Natural killer cell (primary cell): ENCODE measurements at regions of chr21 and their contacts with region 1.

Region 1: DNA sequence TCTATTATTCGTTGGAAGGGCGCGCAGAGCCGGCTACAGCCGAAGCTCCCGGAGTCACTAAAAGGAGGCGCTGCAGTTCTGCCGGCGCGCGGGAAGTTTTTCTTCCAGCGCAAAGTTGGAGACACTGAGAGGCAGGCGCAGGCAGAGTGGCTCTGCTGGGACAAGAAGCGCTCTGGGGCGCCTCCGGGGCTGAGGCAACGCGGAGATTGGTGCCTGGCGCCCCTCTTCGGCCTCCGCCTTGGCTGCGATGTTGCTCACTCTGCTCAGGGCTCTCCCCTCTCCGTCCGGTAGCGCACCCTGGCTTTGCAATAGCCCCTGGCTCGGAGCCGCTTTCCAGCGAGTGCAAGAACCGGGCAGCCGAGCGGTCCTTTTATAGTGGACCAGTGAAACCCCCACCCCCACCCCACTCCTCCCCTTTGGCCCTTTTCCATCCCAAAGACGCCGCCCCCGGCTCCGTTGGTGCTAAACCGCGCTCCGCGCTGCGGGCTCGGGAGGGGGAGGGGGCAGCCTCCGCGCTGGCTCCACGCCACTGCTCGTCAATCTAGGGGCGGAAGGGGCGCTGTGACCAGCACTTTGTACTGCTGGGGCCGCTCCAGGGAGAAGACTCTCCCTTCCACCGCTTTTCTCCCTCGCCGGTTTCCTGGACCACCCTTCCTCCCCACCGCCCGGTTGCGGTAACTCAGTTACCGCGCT is at the start of gene ADAMTS1:
- DNase-seq: peak; percentile 42 to 61
- ATAC-seq: peak; percentile 52 to 65 (median 63)
- H3K4me3 ChIP-seq: peak within 1 kb of the TSS; percentile 70
- H3K4me3 Mint-ChIP-seq: peak within 1 kb of the TSS; percentile 91
- H3K27ac ChIP-seq: peak within 1 kb of the TSS; percentile 34
- H3K27ac Mint-ChIP-seq: peak within 1 kb of the TSS; percentile 81 to 91
- H3K4me1 ChIP-seq: peaks cover 38% of the 10 kb centered on the region
- H3K4me1 Mint-ChIP-seq: peaks cover 58 to 71% of the 10 kb centered on the region in 2 donors
- H3K27me3 ChIP-seq: no peaks in the 10 kb centered on the region
- H3K27me3 Mint-ChIP-seq: peaks cover 9 to 15% of the 10 kb centered on the region in 2 donors
- CTCF ChIP-seq: no peak
- total RNA-seq, gene ADAMTS1: 12.5 to 18.7 (median 17.1) TPM

Region 2: DNA sequence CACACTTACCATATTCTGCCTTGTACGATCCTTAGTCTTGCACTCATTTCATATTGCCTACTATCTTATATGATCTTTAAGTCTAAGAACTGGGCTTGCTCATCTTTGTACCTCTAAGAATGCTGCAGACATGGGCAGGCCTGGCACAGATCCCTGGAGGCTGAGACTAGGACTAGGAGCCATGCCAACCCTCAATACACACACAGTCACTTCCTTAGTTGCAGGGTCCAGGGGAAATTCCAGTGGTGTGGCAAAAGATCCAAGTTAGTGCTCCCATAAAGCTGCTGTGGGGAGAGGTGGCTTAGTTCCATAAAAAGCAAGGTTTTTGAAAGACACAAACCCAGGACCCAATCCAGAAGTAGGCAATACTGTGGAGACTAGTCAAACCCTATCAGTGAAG is 332.0 kb before region 1 on chr21:
- intact Hi-C with region 1: no loop called
- DNase-seq: no peak
- ATAC-seq: no peak
- H3K4me3 ChIP-seq: no peak overlapping the region
- H3K4me3 Mint-ChIP-seq: no peak overlapping the region
- H3K27ac ChIP-seq: no peak overlapping the region
- H3K27ac Mint-ChIP-seq: no peak overlapping the region
- H3K4me1 ChIP-seq: no peaks in the 10 kb centered on the region
- H3K4me1 Mint-ChIP-seq: no peaks in the 10 kb centered on the region
- H3K27me3 ChIP-seq: no peaks in the 10 kb centered on the region
- H3K27me3 Mint-ChIP-seq: no peaks in the 10 kb centered on the region
- CTCF ChIP-seq: no peak

Region 3: DNA sequence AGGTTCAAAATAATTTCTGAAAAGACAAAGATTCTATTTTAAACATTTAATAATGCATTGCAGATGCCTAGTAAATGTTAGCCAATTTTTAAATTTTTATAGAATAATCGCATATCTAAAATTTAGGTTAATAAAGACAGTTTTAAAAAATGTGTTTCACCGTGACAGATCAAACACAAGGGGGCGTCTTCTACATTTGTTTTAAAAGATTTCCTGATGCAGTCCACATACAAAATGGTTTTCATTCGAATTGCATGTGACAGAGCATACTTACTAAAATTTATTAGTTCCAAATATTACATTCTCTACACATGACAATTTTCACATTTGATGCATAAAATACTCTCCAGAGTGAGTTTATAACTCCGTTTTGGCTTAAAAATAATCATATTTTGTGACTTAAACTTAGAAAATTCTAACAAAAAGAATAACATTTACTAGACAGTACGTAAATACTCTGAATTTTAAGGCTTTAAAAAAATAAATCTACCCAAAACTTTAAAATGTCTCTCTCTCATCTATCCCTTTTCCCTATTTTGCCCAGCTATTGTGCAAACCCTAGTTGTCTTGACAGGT is 75.5 kb before region 1 on chr21:
- intact Hi-C with region 1: loop called (anchors 2 kb)
- DNase-seq: peak in 1 of 2 donors; percentile 20
- ATAC-seq: no peak
- H3K4me3 ChIP-seq: no peak overlapping the region
- H3K4me3 Mint-ChIP-seq: no peak overlapping the region
- H3K27ac ChIP-seq: no peak overlapping the region
- H3K27ac Mint-ChIP-seq: no peak overlapping the region
- H3K4me1 ChIP-seq: no peaks in the 10 kb centered on the region
- H3K4me1 Mint-ChIP-seq: no peaks in the 10 kb centered on the region
- H3K27me3 ChIP-seq: no peaks in the 10 kb centered on the region
- H3K27me3 Mint-ChIP-seq: no peaks in the 10 kb centered on the region
- CTCF ChIP-seq: peak; percentile 67

Region 4: DNA sequence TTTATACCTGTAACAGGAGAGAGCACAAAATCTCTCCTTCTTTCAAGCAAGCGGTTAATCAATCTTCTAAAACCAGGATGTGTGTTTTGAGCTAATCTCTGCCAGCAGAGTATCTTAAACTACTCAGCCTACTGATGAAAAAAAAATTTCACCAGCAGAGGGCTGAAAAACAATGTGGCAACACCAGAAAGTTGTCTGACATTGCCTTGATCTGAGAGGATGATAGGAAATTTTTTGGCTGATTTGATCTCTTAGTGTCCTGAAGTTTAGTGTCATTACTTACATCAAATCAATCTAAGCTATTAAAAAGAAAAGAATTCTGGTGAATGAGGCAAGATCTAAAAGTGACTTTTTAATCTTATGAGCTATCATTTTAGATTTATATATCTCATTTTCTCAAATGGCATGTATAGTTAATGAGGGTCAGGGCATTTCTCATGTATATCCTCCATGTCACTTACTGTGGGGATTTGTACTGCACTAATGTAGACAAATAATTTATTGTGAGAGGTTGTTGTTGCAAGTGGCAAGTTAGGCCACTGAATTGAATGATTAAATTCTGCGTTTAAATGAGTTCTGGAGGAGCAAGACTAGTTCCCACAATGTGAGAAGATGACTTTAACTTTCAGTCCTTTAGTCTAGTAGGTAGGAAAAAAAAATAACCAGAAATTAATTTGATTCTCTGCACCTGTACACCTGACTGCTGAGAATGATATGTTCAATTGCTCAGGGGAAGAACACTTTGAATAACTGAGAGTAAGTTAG is 10.8 kb before region 1 on chr21:
- intact Hi-C with region 1: loop called (anchors 2 kb)
- DNase-seq: peak in 1 of 2 donors; percentile 9
- ATAC-seq: peak; percentile 40 to 66 (median 57)
- H3K4me3 ChIP-seq: no peak overlapping the region
- H3K4me3 Mint-ChIP-seq: peak overlapping the region; percentile 79
- H3K27ac ChIP-seq: no peak overlapping the region
- H3K27ac Mint-ChIP-seq: peak overlapping the region; percentile 84 to 94
- H3K4me1 ChIP-seq: peaks cover 40% of the 10 kb centered on the region
- H3K4me1 Mint-ChIP-seq: peaks cover 72 to 74% of the 10 kb centered on the region in 2 donors
- H3K27me3 ChIP-seq: no peaks in the 10 kb centered on the region
- H3K27me3 Mint-ChIP-seq: no peaks in the 10 kb centered on the region
- CTCF ChIP-seq: no peak

Region 5: GRCh38 chr21:27275294-27275927 is 430.2 kb after region 1 on chr21:
- intact Hi-C with region 1: no loop called
- DNase-seq: no peak
- ATAC-seq: no peak
- H3K4me3 ChIP-seq: no peak overlapping the region
- H3K4me3 Mint-ChIP-seq: no peak overlapping the region
- H3K27ac ChIP-seq: no peak overlapping the region
- H3K27ac Mint-ChIP-seq: no peak overlapping the region
- H3K4me1 ChIP-seq: no peaks in the 10 kb centered on the region
- H3K4me1 Mint-ChIP-seq: no peaks in the 10 kb centered on the region
- H3K27me3 ChIP-seq: no peaks in the 10 kb centered on the region
- H3K27me3 Mint-ChIP-seq: no peaks in the 10 kb centered on the region
- CTCF ChIP-seq: no peak

Region 6: GRCh38 chr21:28522014-28522799 is 1677.0 kb after region 1 on chr21:
- intact Hi-C with region 1: loop called (anchors 5 kb)
- DNase-seq: peak in 1 of 2 donors; percentile 17
- ATAC-seq: peak; percentile 87 to 92 (median 89)
- H3K4me3 ChIP-seq: no peak overlapping the region
- H3K4me3 Mint-ChIP-seq: peak overlapping the region; percentile 17
- H3K27ac ChIP-seq: no peak overlapping the region
- H3K27ac Mint-ChIP-seq: peak overlapping the region in 1 of 2 donors; percentile 49
- H3K4me1 ChIP-seq: peaks cover 12% of the 10 kb centered on the region
- H3K4me1 Mint-ChIP-seq: peaks cover 22 to 27% of the 10 kb centered on the region in 2 donors
- H3K27me3 ChIP-seq: no peaks in the 10 kb centered on the region
- H3K27me3 Mint-ChIP-seq: no peaks in the 10 kb centered on the region
- CTCF ChIP-seq: peak; percentile 39

Region 7: GRCh38 chr21:28793043-28793442 is 1947.8 kb after region 1 on chr21:
- intact Hi-C with region 1: loop called (anchors 1 kb)
- DNase-seq: peak in 1 of 2 donors; percentile 31
- ATAC-seq: peak; percentile 63 to 79 (median 69)
- H3K4me3 ChIP-seq: no peak overlapping the region
- H3K4me3 Mint-ChIP-seq: peak overlapping the region; percentile 43
- H3K27ac ChIP-seq: no peak overlapping the region
- H3K27ac Mint-ChIP-seq: peak overlapping the region; percentile 42 to 61
- H3K4me1 ChIP-seq: peaks cover 14% of the 10 kb centered on the region
- H3K4me1 Mint-ChIP-seq: peaks cover 54% of the 10 kb centered on the region in 2 donors
- H3K27me3 ChIP-seq: no peaks in the 10 kb centered on the region
- H3K27me3 Mint-ChIP-seq: no peaks in the 10 kb centered on the region
- CTCF ChIP-seq: peak; percentile 71